T-cell (primary cell): ENCODE measurements at regions of chr20 and their contacts with region 1.

Region 1: GRCh38 chr20:63810730-63811494 is 20.2 kb downstream of the ZBTB46 start:
- DNase-seq: no peak
- ATAC-seq: no peak
- H3K4me3 ChIP-seq: no peak overlapping the region
- H3K4me3 Mint-ChIP-seq: no peak overlapping the region
- H3K27ac ChIP-seq: no peak overlapping the region
- H3K27ac Mint-ChIP-seq: no peak overlapping the region
- H3K4me1 ChIP-seq: no peaks in the 10 kb centered on the region
- H3K4me1 Mint-ChIP-seq: no peaks in the 10 kb centered on the region
- H3K27me3 ChIP-seq: peaks cover 0 to 19% of the 10 kb centered on the region in 2 experiments
- H3K27me3 Mint-ChIP-seq: peaks cover 0 to 4% of the 10 kb centered on the region in 2 donors

Region 2: DNA sequence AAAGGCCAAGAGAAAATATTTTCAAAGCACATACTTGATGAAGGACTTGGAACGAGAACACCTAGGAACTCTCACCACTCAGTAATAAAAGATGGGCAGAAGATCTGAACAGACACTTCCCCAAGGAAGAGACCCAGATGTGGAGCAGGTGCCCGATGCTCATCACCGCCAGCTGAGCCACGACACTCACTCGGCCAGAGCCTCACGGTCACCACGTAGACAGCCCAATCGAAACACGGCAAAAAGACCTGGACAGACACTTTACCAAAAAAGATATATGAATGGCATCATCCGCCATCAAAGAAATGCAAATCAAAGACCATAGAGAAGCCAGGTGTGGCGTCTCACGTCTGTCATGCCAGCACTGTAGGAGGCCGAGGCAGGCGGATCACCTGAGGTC is 29.7 kb before region 1 on chr20:
- CTCF ChIA-PET with region 1: no interaction called
- POLR2A ChIA-PET with region 1: interaction called in 1 of 2 experiments, 10 read pairs
- DNase-seq: no peak
- ATAC-seq: no peak
- H3K4me3 ChIP-seq: no peak overlapping the region
- H3K4me3 Mint-ChIP-seq: peak overlapping the region in 1 of 3 donors; percentile 40
- H3K27ac ChIP-seq: no peak overlapping the region
- H3K27ac Mint-ChIP-seq: peak overlapping the region in 1 of 2 donors; percentile 64
- H3K4me1 ChIP-seq: peaks cover 0 to 20% of the 10 kb centered on the region in 2 experiments
- H3K4me1 Mint-ChIP-seq: peaks cover 13 to 21% (median 20%) of the 10 kb centered on the region in 3 donors
- H3K27me3 ChIP-seq: no peaks in the 10 kb centered on the region
- H3K27me3 Mint-ChIP-seq: no peaks in the 10 kb centered on the region

Region 3: DNA sequence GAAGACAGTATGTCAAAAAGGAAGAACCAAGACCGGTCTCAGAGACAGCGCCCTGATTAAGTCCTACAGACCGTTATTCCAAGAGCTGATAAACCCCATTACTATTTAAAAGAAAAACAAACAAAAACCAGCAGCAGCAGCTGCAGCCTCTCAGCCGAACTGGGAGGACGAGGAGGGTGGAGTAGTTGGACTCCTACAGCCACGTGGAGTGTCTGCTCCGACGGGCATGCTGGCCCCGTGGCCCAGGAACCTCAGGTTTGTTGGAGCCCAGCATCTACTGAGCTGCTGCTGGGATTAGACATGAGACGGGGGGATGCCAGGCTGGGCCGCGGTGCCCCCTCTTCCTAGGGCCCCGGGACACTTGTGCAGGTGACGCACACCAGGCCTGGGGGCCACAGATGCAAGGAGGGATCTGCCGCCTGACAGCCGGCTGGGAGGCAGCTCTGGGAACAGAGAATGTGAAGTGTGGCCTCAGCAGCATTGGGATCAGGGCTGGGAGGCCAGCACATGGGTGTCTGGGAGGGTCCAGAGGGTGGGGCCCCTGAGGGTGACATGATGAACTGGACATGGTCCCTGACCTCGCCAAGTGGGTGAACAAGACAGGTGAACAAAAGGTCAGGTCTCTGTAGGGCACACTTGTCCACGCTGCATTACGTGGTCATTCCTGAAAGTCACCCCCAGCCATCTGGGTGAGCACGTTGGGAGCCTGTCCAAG is 23.0 kb after region 1 on chr20:
- CTCF ChIA-PET with region 1: no interaction called
- POLR2A ChIA-PET with region 1: no interaction called
- DNase-seq: no peak
- ATAC-seq: no peak
- H3K4me3 ChIP-seq: no peak overlapping the region
- H3K4me3 Mint-ChIP-seq: peak overlapping the region in 1 of 3 donors; percentile 58
- H3K27ac ChIP-seq: no peak overlapping the region
- H3K27ac Mint-ChIP-seq: no peak overlapping the region
- H3K4me1 ChIP-seq: peaks cover 3 to 9% of the 10 kb centered on the region in 2 experiments
- H3K4me1 Mint-ChIP-seq: peaks cover 9 to 18% (median 11%) of the 10 kb centered on the region in 3 donors
- H3K27me3 ChIP-seq: peaks cover 5 to 48% of the 10 kb centered on the region in 2 experiments
- H3K27me3 Mint-ChIP-seq: peaks cover 9 to 28% of the 10 kb centered on the region in 2 donors

Region 4: DNA sequence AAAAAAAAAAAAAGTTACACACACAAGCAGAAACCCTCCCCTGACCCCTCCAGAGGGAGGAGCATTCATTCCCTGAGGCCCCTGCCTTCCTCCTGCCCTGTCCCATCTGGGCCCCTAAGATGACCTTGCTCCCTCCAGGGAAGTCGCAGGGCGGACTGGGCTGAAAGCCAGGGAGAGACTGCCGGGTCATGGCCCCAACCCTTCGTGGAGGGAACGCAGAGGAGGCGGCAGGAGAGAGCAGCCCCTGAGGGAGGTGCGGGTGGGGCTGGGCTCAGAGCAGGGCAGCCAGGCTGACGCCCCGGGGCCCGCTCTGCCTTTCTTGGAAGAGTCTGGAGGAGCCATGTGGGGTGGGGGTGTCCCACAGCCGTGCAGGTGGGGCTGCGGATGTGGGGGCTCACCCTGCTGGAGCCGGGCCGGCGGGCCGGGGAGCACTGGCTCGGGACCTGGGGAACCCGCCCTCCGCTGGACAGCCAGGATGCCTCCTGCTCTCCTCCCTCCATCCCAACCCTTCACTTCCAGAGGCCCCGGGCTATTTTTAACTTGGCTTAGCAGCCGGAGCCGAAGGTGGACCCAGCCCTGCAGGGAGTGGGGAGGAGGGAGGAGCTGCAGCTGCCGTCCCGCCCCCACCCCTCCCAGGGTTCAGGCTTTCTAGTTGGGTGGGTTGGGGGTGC is 35.4 kb after region 1 on chr20:
- CTCF ChIA-PET with region 1: no interaction called
- POLR2A ChIA-PET with region 1: no interaction called
- DNase-seq: no peak
- ATAC-seq: peak in 3 of 4 experiments; percentile 29 to 38 (median 37)
- H3K4me3 ChIP-seq: no peak overlapping the region
- H3K4me3 Mint-ChIP-seq: peak overlapping the region in 1 of 3 donors; percentile 51
- H3K27ac ChIP-seq: no peak overlapping the region
- H3K27ac Mint-ChIP-seq: no peak overlapping the region
- H3K4me1 ChIP-seq: peaks cover 5 to 45% of the 10 kb centered on the region in 2 experiments
- H3K4me1 Mint-ChIP-seq: peaks cover 11 to 22% (median 12%) of the 10 kb centered on the region in 3 donors
- H3K27me3 ChIP-seq: peaks cover 2 to 86% of the 10 kb centered on the region in 2 experiments
- H3K27me3 Mint-ChIP-seq: peaks cover 22 to 58% of the 10 kb centered on the region in 2 donors